ENCODE measurements at regions of chr6 and their contacts with region 1.

Region 1: GRCh38 chr6:90194371-90194841 is 102.2 kb downstream of the BACH2 start:
- DNase-seq: no peak
- H3K4me3 ChIP-seq: no peak overlapping the region
- H3K27ac ChIP-seq: no peak overlapping the region
- H3K4me1 ChIP-seq: no peaks in the 10 kb centered on the region
- H3K27me3 ChIP-seq: no peaks in the 10 kb centered on the region
- CTCF ChIP-seq: no peak
- POLR2A ChIP-seq: no peak

Region 2: GRCh38 chr6:90039911-90040310 is 154.5 kb before region 1 on chr6:
- intact Hi-C with region 1: no loop called
- DNase-seq: no peak
- H3K4me3 ChIP-seq: no peak overlapping the region
- H3K27ac ChIP-seq: no peak overlapping the region
- H3K4me1 ChIP-seq: no peaks in the 10 kb centered on the region
- H3K27me3 ChIP-seq: no peaks in the 10 kb centered on the region
- CTCF ChIP-seq: no peak
- POLR2A ChIP-seq: no peak

Region 3: DNA sequence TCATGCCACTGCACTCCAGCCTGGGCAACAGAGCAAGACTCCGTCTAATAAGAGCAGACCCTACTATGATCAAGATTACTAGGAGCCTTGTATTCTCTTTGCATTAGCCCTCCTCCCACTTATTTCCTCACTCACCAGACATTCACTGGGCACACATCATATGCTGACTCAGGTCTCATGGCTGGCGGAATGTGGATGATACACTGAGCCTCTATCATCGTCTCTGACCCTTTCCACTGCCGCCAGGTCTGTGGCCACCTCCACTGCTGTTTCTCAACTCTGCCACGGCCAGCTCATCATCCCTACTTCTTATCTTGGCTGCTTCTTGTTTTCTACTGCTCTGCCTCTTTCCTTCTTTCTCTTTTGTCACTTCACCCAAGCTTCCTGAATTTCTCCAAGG is 58.7 kb before region 1 on chr6:
- intact Hi-C with region 1: loop called (anchors 5 kb)
- DNase-seq: no peak
- H3K4me3 ChIP-seq: no peak overlapping the region
- H3K27ac ChIP-seq: no peak overlapping the region
- H3K4me1 ChIP-seq: no peaks in the 10 kb centered on the region
- H3K27me3 ChIP-seq: no peaks in the 10 kb centered on the region
- CTCF ChIP-seq: no peak
- POLR2A ChIP-seq: no peak

Measured in prostate gland (tissue), 2 donors.